CD8-positive, alpha-beta T cell (primary cell): ENCODE measurements at regions of chr4 and their contacts with region 1.

Region 1: DNA sequence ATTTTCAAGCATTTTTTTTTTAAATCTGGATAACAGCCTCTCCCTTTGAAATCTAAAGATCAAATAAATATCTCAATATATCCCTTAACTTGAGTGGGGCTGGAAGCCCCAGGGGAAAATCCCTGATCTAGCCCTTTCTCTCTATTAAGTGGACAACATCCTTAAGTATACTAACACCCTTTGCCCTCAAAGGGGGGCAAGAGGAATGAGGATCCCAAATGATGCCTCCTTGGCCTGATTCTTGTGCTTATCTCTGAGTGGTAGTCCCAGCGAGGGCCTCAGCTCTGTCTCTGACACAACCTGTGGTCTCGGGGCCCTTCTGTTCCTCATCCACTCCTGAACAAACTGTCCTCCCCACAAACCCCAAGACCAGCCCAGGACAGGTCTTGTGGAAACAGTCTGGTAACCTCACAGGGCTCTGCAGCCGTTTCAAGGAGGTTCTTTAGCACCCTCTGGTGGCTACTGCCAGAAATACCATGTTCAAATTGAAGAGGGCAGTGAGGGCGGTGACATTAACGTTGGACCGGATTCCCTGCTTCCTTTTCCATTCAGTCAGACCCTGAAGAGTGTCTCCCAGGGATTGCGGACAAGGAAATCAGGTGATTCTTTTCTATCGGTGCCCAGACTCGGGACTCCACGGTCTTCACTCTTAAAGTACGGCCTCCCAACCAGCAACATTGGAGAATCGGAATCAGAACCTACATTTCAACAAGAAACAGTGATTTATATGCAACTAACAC is 12.9 kb downstream of the CXCL13 start:
- DNase-seq: peak; percentile 10 to 72 (median 59)
- ATAC-seq: peak; percentile 69
- H3K4me3 ChIP-seq: no peak overlapping the region
- H3K4me3 Mint-ChIP-seq: no peak overlapping the region
- H3K27ac ChIP-seq: no peak overlapping the region
- H3K27ac Mint-ChIP-seq: no peak overlapping the region
- H3K4me1 ChIP-seq: no peaks in the 10 kb centered on the region
- H3K4me1 Mint-ChIP-seq: peaks cover 6% of the 10 kb centered on the region
- H3K27me3 ChIP-seq: peaks cover 0 to 2% of the 10 kb centered on the region in 2 experiments
- H3K27me3 Mint-ChIP-seq: peaks cover 4% of the 10 kb centered on the region
- CTCF ChIP-seq: peak; percentile 89

Region 2: GRCh38 chr4:76028350-76028765 is 1590.2 kb before region 1 on chr4:
- CTCF ChIA-PET with region 1: no interaction called
- POLR2A ChIA-PET with region 1: no interaction called
- intact Hi-C with region 1: no loop called
- DNase-seq: peak in 2 of 9 experiments; percentile 3 to 31
- ATAC-seq: no peak
- H3K4me3 ChIP-seq: peak overlapping the region in 1 of 2 experiments; percentile 31
- H3K4me3 Mint-ChIP-seq: peak overlapping the region; percentile 38
- H3K27ac ChIP-seq: no peak overlapping the region
- H3K27ac Mint-ChIP-seq: no peak overlapping the region
- H3K4me1 ChIP-seq: peaks cover 5% of the 10 kb centered on the region
- H3K4me1 Mint-ChIP-seq: peaks cover 7% of the 10 kb centered on the region
- H3K27me3 ChIP-seq: no peaks in the 10 kb centered on the region
- H3K27me3 Mint-ChIP-seq: no peaks in the 10 kb centered on the region
- CTCF ChIP-seq: no peak

Region 3: DNA sequence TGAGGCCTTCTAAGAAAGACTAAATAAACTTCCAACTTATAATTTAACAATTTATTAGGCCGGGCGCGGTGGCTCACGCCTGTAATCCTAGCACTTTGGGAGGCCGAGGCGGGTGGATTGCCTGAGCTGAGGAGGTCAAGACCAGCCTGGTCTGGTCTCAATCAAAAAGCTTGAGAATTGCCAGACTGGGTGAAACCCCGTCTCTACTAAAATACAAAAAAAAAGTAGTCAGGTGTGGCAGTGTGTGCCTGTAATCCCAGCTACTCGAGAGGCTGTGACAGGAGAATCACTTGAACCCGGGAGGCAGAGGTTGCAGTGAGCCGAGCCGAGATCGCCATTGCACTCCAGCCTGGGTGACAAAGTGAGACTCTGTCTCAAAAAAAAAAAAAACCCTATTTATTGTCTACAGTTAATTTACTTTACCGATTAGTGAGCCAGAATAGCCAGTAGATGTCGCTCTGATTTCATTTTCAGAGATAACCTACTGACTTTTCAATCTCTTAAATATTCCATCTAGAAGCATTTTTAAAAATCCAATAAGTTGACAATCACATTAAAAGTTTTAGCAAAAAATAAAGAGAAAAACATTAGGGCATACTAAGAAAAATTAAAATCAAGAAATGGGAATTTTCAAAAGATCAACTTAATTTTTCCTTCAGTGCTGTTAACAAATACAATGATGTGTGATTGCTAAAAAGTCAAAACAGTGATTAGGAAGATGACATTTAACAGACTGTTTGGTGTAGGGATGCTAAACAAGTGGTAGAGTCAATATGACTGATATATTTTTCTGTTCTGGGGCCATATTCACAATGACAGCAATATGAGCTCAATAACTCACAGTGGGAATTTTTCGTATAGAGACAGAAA is 1187.8 kb before region 1 on chr4:
- CTCF ChIA-PET with region 1: no interaction called
- POLR2A ChIA-PET with region 1: no interaction called
- intact Hi-C with region 1: loop called in 1 of 2 experiments (anchors 5 kb)
- DNase-seq: peak in 2 of 9 experiments; percentile 52 to 61
- ATAC-seq: no peak
- H3K4me3 ChIP-seq: no peak overlapping the region
- H3K4me3 Mint-ChIP-seq: no peak overlapping the region
- H3K27ac ChIP-seq: no peak overlapping the region
- H3K27ac Mint-ChIP-seq: no peak overlapping the region
- H3K4me1 ChIP-seq: no peaks in the 10 kb centered on the region
- H3K4me1 Mint-ChIP-seq: no peaks in the 10 kb centered on the region
- H3K27me3 ChIP-seq: no peaks in the 10 kb centered on the region
- H3K27me3 Mint-ChIP-seq: peaks cover under 1% of the 10 kb centered on the region
- CTCF ChIP-seq: peak; percentile 67

Region 4: GRCh38 chr4:77036206-77036605 is 582.3 kb before region 1 on chr4:
- CTCF ChIA-PET with region 1: no interaction called
- POLR2A ChIA-PET with region 1: no interaction called
- intact Hi-C with region 1: loop called in 1 of 2 experiments (anchors 10 kb)
- DNase-seq: no peak
- ATAC-seq: no peak
- H3K4me3 ChIP-seq: no peak overlapping the region
- H3K4me3 Mint-ChIP-seq: no peak overlapping the region
- H3K27ac ChIP-seq: no peak overlapping the region
- H3K27ac Mint-ChIP-seq: no peak overlapping the region
- H3K4me1 ChIP-seq: peaks cover 14% of the 10 kb centered on the region
- H3K4me1 Mint-ChIP-seq: peaks cover 13% of the 10 kb centered on the region
- H3K27me3 ChIP-seq: no peaks in the 10 kb centered on the region
- H3K27me3 Mint-ChIP-seq: no peaks in the 10 kb centered on the region
- CTCF ChIP-seq: no peak

Region 5: GRCh38 chr4:77385124-77385969 is 233.2 kb before region 1 on chr4:
- CTCF ChIA-PET with region 1: no interaction called
- POLR2A ChIA-PET with region 1: no interaction called
- intact Hi-C with region 1: loop called (anchors 1 kb)
- DNase-seq: peak; percentile 7 to 68 (median 41)
- ATAC-seq: peak; percentile 29
- H3K4me3 ChIP-seq: no peak overlapping the region
- H3K4me3 Mint-ChIP-seq: no peak overlapping the region
- H3K27ac ChIP-seq: no peak overlapping the region
- H3K27ac Mint-ChIP-seq: no peak overlapping the region
- H3K4me1 ChIP-seq: no peaks in the 10 kb centered on the region
- H3K4me1 Mint-ChIP-seq: no peaks in the 10 kb centered on the region
- H3K27me3 ChIP-seq: no peaks in the 10 kb centered on the region
- H3K27me3 Mint-ChIP-seq: no peaks in the 10 kb centered on the region
- CTCF ChIP-seq: peak; percentile 64

Region 6: GRCh38 chr4:77465271-77465670 is 153.3 kb before region 1 on chr4:
- CTCF ChIA-PET with region 1: no interaction called
- POLR2A ChIA-PET with region 1: no interaction called
- intact Hi-C with region 1: loop called in 1 of 2 experiments (anchors 1 kb)
- DNase-seq: peak in 1 of 9 experiments; percentile 12
- ATAC-seq: no peak
- H3K4me3 ChIP-seq: no peak overlapping the region
- H3K4me3 Mint-ChIP-seq: no peak overlapping the region
- H3K27ac ChIP-seq: no peak overlapping the region
- H3K27ac Mint-ChIP-seq: no peak overlapping the region
- H3K4me1 ChIP-seq: no peaks in the 10 kb centered on the region
- H3K4me1 Mint-ChIP-seq: no peaks in the 10 kb centered on the region
- H3K27me3 ChIP-seq: no peaks in the 10 kb centered on the region
- H3K27me3 Mint-ChIP-seq: peaks cover 6% of the 10 kb centered on the region
- CTCF ChIP-seq: no peak

Region 7: DNA sequence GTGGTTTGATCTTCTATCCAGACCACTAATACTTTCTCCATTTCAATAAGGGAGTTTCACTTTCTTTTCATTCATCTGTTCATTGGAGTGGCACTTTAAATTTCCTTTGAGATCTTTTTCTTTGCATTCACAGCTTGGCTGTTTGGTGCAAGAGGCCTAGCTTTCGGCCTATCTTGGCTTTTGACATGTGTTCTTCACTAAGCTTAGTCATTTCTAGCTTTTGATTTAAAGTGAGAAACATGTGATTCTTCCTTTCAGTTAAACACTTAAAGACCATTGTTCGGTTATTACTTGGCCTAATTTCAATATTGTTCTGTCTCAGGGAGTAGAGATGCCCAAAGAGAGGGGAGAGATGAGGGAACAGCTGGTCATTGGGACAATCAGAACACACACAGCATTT is 11.3 kb after region 1 on chr4:
- CTCF ChIA-PET with region 1: interaction called, 12 read pairs
- POLR2A ChIA-PET with region 1: no interaction called
- intact Hi-C with region 1: no loop called
- DNase-seq: no peak
- ATAC-seq: no peak
- H3K4me3 ChIP-seq: no peak overlapping the region
- H3K4me3 Mint-ChIP-seq: no peak overlapping the region
- H3K27ac ChIP-seq: no peak overlapping the region
- H3K27ac Mint-ChIP-seq: no peak overlapping the region
- H3K4me1 ChIP-seq: no peaks in the 10 kb centered on the region
- H3K4me1 Mint-ChIP-seq: peaks cover 6% of the 10 kb centered on the region
- H3K27me3 ChIP-seq: no peaks in the 10 kb centered on the region
- H3K27me3 Mint-ChIP-seq: no peaks in the 10 kb centered on the region
- CTCF ChIP-seq: no peak